Activated CD8-positive, alpha-beta T cell treated with anti-CD3 and anti-CD28 coated beads, Interleukin-2, amount 10 ng/mL, durations not matched to agents 7 days and 5 days (primary cell): ENCODE measurements at regions of chr17 and their contacts with region 1.

Region 1: GRCh38 chr17:57833179-57833939 is 16.5 kb downstream of the MRPS23 start:
- DNase-seq: peak; percentile 84
- ATAC-seq: peak; percentile 67
- H3K4me3 Mint-ChIP-seq: peak overlapping the region; percentile 35
- H3K27ac Mint-ChIP-seq: peak overlapping the region; percentile 80
- H3K4me1 Mint-ChIP-seq: no peaks in the 10 kb centered on the region
- H3K27me3 Mint-ChIP-seq: no peaks in the 10 kb centered on the region

Region 2: GRCh38 chr17:57142925-57143324 is 690.4 kb before region 1 on chr17:
- CTCF ChIA-PET with region 1: interaction called, 13 read pairs
- POLR2A ChIA-PET with region 1: no interaction called
- DNase-seq: no peak
- ATAC-seq: no peak
- H3K4me3 Mint-ChIP-seq: no peak overlapping the region
- H3K27ac Mint-ChIP-seq: no peak overlapping the region
- H3K4me1 Mint-ChIP-seq: peaks cover 3% of the 10 kb centered on the region
- H3K27me3 Mint-ChIP-seq: peaks cover 8% of the 10 kb centered on the region

Region 3: DNA sequence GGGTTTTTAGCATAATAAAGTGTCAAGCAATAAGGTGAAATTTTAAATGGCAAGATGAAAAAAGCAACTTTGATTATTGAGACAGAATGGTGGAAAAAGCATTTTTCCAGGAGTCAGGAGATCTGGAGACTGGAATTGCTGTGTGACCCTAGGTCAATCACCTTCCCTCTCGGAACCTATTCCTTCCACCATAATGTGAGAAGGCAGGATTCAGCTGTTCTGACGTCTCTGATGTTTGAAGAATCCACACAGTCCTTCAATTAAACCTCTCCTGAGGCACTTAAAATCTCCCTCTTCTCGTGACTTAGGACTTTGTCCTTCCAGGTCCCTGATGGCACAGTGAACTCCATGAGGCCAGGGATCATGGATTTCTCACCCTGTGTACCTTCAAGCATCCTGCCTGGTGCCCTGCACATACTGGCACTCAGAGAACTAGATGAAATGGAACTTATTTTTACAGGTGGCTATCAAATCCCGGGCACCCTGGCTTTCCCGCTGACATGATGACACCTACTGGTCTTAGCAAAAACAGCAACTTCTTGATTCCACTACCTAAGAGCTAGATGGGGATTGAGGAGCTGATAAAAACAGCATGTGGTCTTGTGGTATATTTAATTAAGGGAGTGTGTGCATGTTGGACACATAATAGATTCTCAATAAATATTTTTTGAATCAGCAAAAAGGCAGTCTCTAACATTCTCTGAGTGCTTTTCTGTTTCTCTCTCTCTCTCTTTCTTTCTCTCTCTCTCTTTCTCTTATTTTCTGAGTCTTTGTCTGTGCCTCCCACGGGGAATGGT is 85.9 kb before region 1 on chr17:
- CTCF ChIA-PET with region 1: interaction called, 15 read pairs
- POLR2A ChIA-PET with region 1: no interaction called
- DNase-seq: peak; percentile 68
- ATAC-seq: peak; percentile 77
- H3K4me3 Mint-ChIP-seq: no peak overlapping the region
- H3K27ac Mint-ChIP-seq: no peak overlapping the region
- H3K4me1 Mint-ChIP-seq: peaks cover 29% of the 10 kb centered on the region
- H3K27me3 Mint-ChIP-seq: peaks cover 7% of the 10 kb centered on the region

Region 4: GRCh38 chr17:57783106-57783742 is 50.1 kb before region 1 on chr17:
- CTCF ChIA-PET with region 1: interaction called, 52 read pairs
- POLR2A ChIA-PET with region 1: no interaction called
- DNase-seq: peak; percentile 86
- ATAC-seq: peak; percentile 97
- H3K4me3 Mint-ChIP-seq: no peak overlapping the region
- H3K27ac Mint-ChIP-seq: no peak overlapping the region
- H3K4me1 Mint-ChIP-seq: no peaks in the 10 kb centered on the region
- H3K27me3 Mint-ChIP-seq: peaks cover 22% of the 10 kb centered on the region

Region 5: GRCh38 chr17:57817299-57817698 is 16.1 kb before region 1 on chr17:
- CTCF ChIA-PET with region 1: interaction called, 15 read pairs
- POLR2A ChIA-PET with region 1: no interaction called
- DNase-seq: no peak
- ATAC-seq: no peak
- H3K4me3 Mint-ChIP-seq: no peak overlapping the region
- H3K27ac Mint-ChIP-seq: no peak overlapping the region
- H3K4me1 Mint-ChIP-seq: no peaks in the 10 kb centered on the region
- H3K27me3 Mint-ChIP-seq: peaks cover 34% of the 10 kb centered on the region

Region 6: GRCh38 chr17:57995076-57995956 is 162.0 kb after region 1 on chr17:
- CTCF ChIA-PET with region 1: interaction called, 37 read pairs
- POLR2A ChIA-PET with region 1: no interaction called
- DNase-seq: peak; percentile 64
- ATAC-seq: peak; percentile 73
- H3K4me3 Mint-ChIP-seq: no peak overlapping the region
- H3K27ac Mint-ChIP-seq: no peak overlapping the region
- H3K4me1 Mint-ChIP-seq: peaks cover 60% of the 10 kb centered on the region
- H3K27me3 Mint-ChIP-seq: no peaks in the 10 kb centered on the region